CD4-positive, alpha-beta memory T cell (primary cell): ENCODE measurements at regions of chr12 and their contacts with region 1.

Region 1: DNA sequence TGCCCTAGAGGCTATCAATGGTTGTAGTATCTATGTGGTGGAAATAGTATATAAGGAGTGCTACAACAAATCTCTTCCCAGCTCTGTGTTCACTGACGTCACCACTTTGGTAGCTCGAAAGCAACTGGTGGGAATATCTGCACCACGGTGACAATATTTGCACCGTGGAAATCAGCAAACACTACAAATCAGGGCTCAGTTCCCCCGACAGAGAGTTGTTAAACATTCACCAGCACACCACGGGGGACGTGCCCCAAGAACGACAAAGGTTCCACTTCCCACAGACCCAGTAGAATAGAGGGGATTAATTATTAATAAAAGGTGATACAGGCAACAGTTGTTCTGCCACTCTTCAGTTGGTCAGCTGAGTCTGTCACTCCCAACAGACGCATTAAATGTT is 98.4 kb downstream of the CCDC60 start:
- DNase-seq: no peak
- H3K4me3 ChIP-seq: no peak overlapping the region
- H3K4me3 Mint-ChIP-seq: no peak overlapping the region
- H3K27ac ChIP-seq: no peak overlapping the region
- H3K27ac Mint-ChIP-seq: no peak overlapping the region
- H3K4me1 ChIP-seq: no peaks in the 10 kb centered on the region
- H3K4me1 Mint-ChIP-seq: no peaks in the 10 kb centered on the region
- H3K27me3 ChIP-seq: no peaks in the 10 kb centered on the region
- H3K27me3 Mint-ChIP-seq: peaks cover 3 to 9% of the 10 kb centered on the region in 2 donors

Region 2: GRCh38 chr12:119444456-119445044 is 11.6 kb after region 1 on chr12:
- CTCF ChIA-PET with region 1: interaction called, 15 read pairs
- POLR2A ChIA-PET with region 1: no interaction called
- intact Hi-C with region 1: no loop called
- DNase-seq: peak in 4 of 5 donors; percentile 3 to 8 (median 6)
- H3K4me3 ChIP-seq: no peak overlapping the region
- H3K4me3 Mint-ChIP-seq: no peak overlapping the region
- H3K27ac ChIP-seq: no peak overlapping the region
- H3K27ac Mint-ChIP-seq: no peak overlapping the region
- H3K4me1 ChIP-seq: no peaks in the 10 kb centered on the region
- H3K4me1 Mint-ChIP-seq: peaks cover 0 to 3% (median 0%) of the 10 kb centered on the region in 4 donors
- H3K27me3 ChIP-seq: no peaks in the 10 kb centered on the region
- H3K27me3 Mint-ChIP-seq: peaks cover 5 to 15% of the 10 kb centered on the region in 2 donors

Region 3: DNA sequence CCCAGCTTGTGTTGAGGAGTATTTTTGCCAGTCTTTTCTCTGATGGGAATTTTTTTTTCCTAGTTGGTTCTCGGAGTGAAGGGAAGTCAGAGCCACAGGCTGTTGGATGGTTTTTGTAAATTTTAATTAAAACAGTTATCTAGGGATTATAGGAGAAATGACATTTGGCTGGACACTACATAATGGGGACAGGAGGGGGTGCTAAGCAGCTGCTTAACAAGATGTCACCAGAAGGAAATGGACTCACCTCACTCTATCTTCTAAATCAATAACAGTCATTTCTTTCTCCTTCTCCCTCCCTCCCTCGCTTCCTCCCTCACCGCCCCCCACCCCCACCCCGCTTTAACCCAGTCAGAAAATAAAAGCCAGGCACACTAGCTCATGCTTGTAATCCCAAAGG is 67.3 kb after region 1 on chr12:
- CTCF ChIA-PET with region 1: no interaction called
- POLR2A ChIA-PET with region 1: no interaction called
- intact Hi-C with region 1: no loop called
- DNase-seq: no peak
- H3K4me3 ChIP-seq: no peak overlapping the region
- H3K4me3 Mint-ChIP-seq: no peak overlapping the region
- H3K27ac ChIP-seq: no peak overlapping the region
- H3K27ac Mint-ChIP-seq: no peak overlapping the region
- H3K4me1 ChIP-seq: no peaks in the 10 kb centered on the region
- H3K4me1 Mint-ChIP-seq: no peaks in the 10 kb centered on the region
- H3K27me3 ChIP-seq: peaks cover 7% of the 10 kb centered on the region
- H3K27me3 Mint-ChIP-seq: peaks cover 19 to 22% of the 10 kb centered on the region in 2 donors